Left cardiac atrium (tissue), 4 donors: ENCODE measurements at regions of chr1 and their contacts with region 1.

Region 1: GRCh38 chr1:66331657-66332547 is 202.1 kb upstream of the SGIP1 start:
- DNase-seq: peak; percentile 80
- ATAC-seq: peak; percentile 66 to 75

Region 2: GRCh38 chr1:65812065-65812464 is 519.8 kb before region 1 on chr1:
- intact Hi-C with region 1: no loop called
- DNase-seq: peak; percentile 33
- ATAC-seq: peak; percentile 79 to 85

Region 3: DNA sequence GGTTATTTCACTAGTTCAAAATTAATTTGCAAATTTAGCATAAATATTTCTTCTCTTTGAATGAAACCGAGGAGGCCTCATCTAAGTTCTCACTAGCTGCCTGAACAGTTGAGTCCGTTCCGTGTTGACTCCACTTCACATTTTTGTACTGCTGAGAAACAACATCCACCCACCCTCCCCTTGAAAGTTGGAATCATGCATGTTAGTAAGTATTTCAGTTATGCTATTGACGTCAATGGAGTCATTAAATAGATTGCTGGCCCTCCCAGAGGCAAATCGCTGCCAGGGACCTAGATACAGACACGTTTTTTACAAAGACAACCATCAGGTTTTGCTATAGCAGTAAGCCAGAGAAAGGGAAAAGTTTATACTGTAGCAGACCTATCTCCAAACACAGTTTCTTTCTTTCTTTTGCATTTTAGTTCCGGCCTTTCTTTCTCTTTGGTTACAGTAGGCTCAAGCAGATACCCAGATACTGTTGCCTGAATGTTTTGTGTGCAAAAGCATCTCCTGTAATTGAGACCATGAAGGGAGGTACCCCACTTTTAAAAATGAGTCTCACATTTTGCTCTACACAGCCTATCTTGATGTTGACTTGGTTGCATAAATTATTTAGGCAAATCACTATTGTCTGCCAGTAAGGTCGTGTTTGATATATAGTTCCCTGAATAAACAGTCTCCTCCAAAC is 60.5 kb before region 1 on chr1:
- intact Hi-C with region 1: loop called (anchors 1 to 5 kb)
- DNase-seq: peak; percentile 87
- ATAC-seq: peak; percentile 91